ENCODE measurements at regions of chr22 and their contacts with region 1.

Region 1: DNA sequence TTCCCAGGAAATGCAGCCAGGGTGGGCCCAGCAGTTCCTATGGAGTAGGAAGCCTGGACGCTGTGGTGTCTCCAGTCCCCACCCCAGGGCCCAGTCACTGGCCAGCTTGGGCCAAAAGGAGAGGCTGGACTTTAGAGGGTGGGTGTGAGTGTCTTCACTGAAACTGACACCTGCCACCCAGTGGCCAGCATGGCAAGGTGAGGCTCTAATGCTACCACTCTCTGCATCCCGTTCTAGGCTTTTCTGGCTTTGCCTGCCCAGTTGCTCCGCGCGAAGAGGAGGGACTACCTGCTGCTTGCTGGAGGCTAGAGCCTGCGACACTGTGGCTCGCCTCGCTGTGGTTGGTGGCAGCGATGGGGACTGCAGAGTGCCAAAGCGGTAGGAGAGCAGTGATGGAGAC is 35.4 kb downstream of the C22orf42 start:
- DNase-seq: peak; percentile 48 to 49
- H3K4me3 ChIP-seq: no peak overlapping the region
- H3K4me3 Mint-ChIP-seq: no peak overlapping the region
- H3K27ac Mint-ChIP-seq: no peak overlapping the region
- H3K4me1 ChIP-seq: no peaks in the 10 kb centered on the region
- H3K4me1 Mint-ChIP-seq: no peaks in the 10 kb centered on the region
- H3K27me3 ChIP-seq: no peaks in the 10 kb centered on the region
- H3K27me3 Mint-ChIP-seq: peaks cover 5% of the 10 kb centered on the region
- CTCF ChIP-seq: peak in 1 of 2 experiments; percentile 39

Region 2: DNA sequence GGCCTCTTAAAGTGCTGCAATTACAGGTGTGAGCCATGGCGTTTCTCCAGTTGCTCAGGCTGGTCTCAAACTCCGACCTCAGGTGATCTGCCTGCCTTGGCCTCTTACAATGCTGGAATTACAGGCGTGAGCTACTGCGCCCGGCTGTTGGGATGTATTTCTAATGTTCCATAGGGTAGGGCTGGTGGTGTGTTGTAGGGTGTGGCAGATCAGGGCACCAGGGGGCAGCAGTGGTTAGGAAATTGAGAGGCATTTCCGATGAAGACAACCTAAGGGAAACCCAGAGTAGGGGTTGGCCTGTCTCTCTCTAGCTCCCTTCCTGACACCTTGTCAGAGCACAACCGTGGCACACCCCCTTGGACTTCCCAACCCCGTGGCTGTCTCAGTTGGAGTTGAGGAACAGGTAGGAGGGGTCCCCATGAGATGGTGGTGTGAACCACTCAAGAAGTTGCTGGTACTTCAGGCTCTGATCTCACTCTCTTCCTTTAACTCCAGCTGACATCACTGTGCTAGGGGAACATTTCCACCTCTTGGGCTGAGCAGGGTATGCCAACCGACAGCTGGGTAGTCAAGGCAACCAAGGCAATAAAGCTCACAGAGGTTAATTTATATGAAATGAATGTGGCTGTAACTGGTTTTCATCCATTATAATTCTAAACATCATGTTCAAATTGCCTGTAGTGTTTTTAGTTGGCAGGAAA is 146.4 kb before region 1 on chr22:
- CTCF ChIA-PET with region 1: no interaction called
- POLR2A ChIA-PET with region 1: no interaction called
- intact Hi-C with region 1: loop called (anchors 1 kb)
- DNase-seq: peak; percentile 84 to 85
- H3K4me3 ChIP-seq: no peak overlapping the region
- H3K4me3 Mint-ChIP-seq: no peak overlapping the region
- H3K27ac Mint-ChIP-seq: no peak overlapping the region
- H3K4me1 ChIP-seq: no peaks in the 10 kb centered on the region
- H3K4me1 Mint-ChIP-seq: no peaks in the 10 kb centered on the region
- H3K27me3 ChIP-seq: no peaks in the 10 kb centered on the region
- H3K27me3 Mint-ChIP-seq: no peaks in the 10 kb centered on the region
- CTCF ChIP-seq: peak; percentile 60 to 88

Region 3: DNA sequence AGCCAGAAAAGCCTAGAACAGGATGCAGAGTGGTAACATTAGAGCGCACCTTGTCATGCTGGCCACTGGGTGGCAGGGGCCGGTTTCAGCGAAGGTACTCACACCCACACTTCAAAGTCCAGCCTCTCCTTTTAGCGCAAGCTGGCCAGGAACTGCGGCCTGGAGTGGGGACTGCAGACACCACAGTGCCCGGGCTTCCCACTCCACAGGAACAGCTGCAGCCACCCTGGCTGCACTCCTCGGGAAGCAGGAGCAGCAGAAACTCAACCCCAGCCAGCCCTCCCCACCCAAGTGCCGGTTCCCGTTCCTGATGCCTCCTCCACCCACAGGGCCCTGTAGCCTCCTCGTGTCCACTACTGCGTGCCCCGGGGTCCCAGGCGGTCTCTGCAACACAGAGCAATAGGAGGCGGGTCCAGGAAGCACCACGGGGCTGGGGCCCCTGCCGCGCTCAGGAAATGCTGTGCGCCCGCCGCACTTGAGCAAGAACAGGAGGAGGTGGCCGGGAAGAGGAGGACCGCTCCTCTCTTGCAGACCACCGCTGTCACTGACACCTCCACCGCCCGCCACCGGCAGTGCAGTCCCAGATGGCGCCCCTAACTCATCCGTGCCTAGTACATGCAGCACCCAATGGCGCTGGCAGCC is 79.0 kb after region 1 on chr22:
- CTCF ChIA-PET with region 1: no interaction called
- POLR2A ChIA-PET with region 1: no interaction called
- intact Hi-C with region 1: loop called (anchors 10 kb)
- DNase-seq: peak; percentile 77 to 80
- H3K4me3 ChIP-seq: 0 out of 2 replicates have a peak overlapping the region, but pooled peaks have one; percentile 3
- H3K4me3 Mint-ChIP-seq: no peak overlapping the region
- H3K27ac Mint-ChIP-seq: no peak overlapping the region
- H3K4me1 ChIP-seq: no peaks in the 10 kb centered on the region
- H3K4me1 Mint-ChIP-seq: peaks cover 10% of the 10 kb centered on the region
- H3K27me3 ChIP-seq: no peaks in the 10 kb centered on the region
- H3K27me3 Mint-ChIP-seq: no peaks in the 10 kb centered on the region
- CTCF ChIP-seq: peak; percentile 66 to 83